ENCODE measurements at regions of chr13 and their contacts with region 1.

Region 1: GRCh38 chr13:31742097-31742734 is 2.9 kb downstream of the RXFP2 start:
- DNase-seq: peak; percentile 40
- ATAC-seq: peak; percentile 90
- H3K4me3 ChIP-seq: no peak overlapping the region
- H3K27ac ChIP-seq: no peak overlapping the region
- H3K4me1 ChIP-seq: no peaks in the 10 kb centered on the region
- H3K27me3 ChIP-seq: peaks cover 65% of the 10 kb centered on the region
- CTCF ChIP-seq: peak; percentile 58 to 98 (median 96); a peak in 5 of 6 replicates
- POLR2A ChIP-seq: no peak
- RAD21 ChIP-seq: peak; percentile 74

Region 2: GRCh38 chr13:31056644-31057271 is 685.5 kb before region 1 on chr13:
- CTCF ChIA-PET with region 1: no interaction called
- POLR2A ChIA-PET with region 1: no interaction called
- RAD21 ChIA-PET with region 1: no interaction called
- intact Hi-C with region 1: no loop called
- DNase-seq: no peak
- ATAC-seq: no peak
- H3K4me3 ChIP-seq: no peak overlapping the region
- H3K27ac ChIP-seq: no peak overlapping the region
- H3K4me1 ChIP-seq: peaks cover 3 to 7% of the 10 kb centered on the region in 2 experiments; a peak in 2 of 4 replicates
- H3K27me3 ChIP-seq: no peaks in the 10 kb centered on the region
- CTCF ChIP-seq: no peak
- POLR2A ChIP-seq: no peak
- RAD21 ChIP-seq: no peak

Region 3: GRCh38 chr13:31236211-31236786 is 505.9 kb before region 1 on chr13:
- CTCF ChIA-PET with region 1: interaction called, 9 read pairs
- POLR2A ChIA-PET with region 1: no interaction called
- RAD21 ChIA-PET with region 1: no interaction called
- intact Hi-C with region 1: loop called (anchors 5 kb)
- DNase-seq: peak; percentile 15
- ATAC-seq: peak; percentile 73
- H3K4me3 ChIP-seq: no peak overlapping the region
- H3K27ac ChIP-seq: no peak overlapping the region
- H3K4me1 ChIP-seq: no peaks in the 10 kb centered on the region
- H3K27me3 ChIP-seq: no peaks in the 10 kb centered on the region
- CTCF ChIP-seq: peak; percentile 59 to 88 (median 73); a peak in 5 of 6 replicates
- POLR2A ChIP-seq: no peak
- RAD21 ChIP-seq: peak; percentile 62

Region 4: DNA sequence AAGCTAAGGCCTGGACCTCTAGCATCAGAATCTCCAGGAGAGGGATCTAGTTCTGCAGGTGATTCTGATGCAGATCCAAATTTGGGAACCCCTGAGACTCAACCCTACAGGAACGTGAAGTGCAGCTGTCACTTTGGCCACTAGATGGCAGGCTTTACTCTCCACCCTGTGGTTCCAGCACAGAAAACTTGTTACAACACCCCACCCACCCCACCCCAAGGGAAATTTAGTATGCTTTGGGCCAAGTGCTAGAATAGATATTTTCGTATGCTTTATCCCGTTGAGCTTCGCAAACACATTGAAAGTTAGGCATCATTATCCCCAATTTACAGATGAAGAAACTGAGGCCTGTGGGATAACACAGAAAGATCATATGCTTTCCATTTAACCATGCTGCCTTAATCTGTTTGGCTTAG is 310.5 kb before region 1 on chr13:
- CTCF ChIA-PET with region 1: interaction called, 5 read pairs
- POLR2A ChIA-PET with region 1: no interaction called
- RAD21 ChIA-PET with region 1: no interaction called
- intact Hi-C with region 1: loop called (anchors 1 kb)
- DNase-seq: peak; percentile 22
- ATAC-seq: peak; percentile 84
- H3K4me3 ChIP-seq: no peak overlapping the region
- H3K27ac ChIP-seq: no peak overlapping the region
- H3K4me1 ChIP-seq: no peaks in the 10 kb centered on the region
- H3K27me3 ChIP-seq: peaks cover 48% of the 10 kb centered on the region
- CTCF ChIP-seq: peak; percentile 6 to 80 (median 71); a peak in 4 of 6 replicates
- POLR2A ChIP-seq: no peak
- RAD21 ChIP-seq: peak; percentile 43; the same call in 1 of the 2 replicates

Region 5: GRCh38 chr13:31538067-31539042 is 203.9 kb before region 1 on chr13:
- CTCF ChIA-PET with region 1: interaction called, 30 read pairs
- POLR2A ChIA-PET with region 1: no interaction called
- RAD21 ChIA-PET with region 1: no interaction called
- intact Hi-C with region 1: loop called (anchors 1 kb)
- DNase-seq: peak; percentile 8
- ATAC-seq: peak; percentile 78
- H3K4me3 ChIP-seq: no peak overlapping the region
- H3K27ac ChIP-seq: no peak overlapping the region
- H3K4me1 ChIP-seq: no peaks in the 10 kb centered on the region
- H3K27me3 ChIP-seq: peaks cover 36% of the 10 kb centered on the region
- CTCF ChIP-seq: peak; percentile 13 to 65 (median 63); a peak in 4 of 6 replicates
- POLR2A ChIP-seq: no peak
- RAD21 ChIP-seq: peak; percentile 22; the same call in 1 of the 2 replicates

Region 6: DNA sequence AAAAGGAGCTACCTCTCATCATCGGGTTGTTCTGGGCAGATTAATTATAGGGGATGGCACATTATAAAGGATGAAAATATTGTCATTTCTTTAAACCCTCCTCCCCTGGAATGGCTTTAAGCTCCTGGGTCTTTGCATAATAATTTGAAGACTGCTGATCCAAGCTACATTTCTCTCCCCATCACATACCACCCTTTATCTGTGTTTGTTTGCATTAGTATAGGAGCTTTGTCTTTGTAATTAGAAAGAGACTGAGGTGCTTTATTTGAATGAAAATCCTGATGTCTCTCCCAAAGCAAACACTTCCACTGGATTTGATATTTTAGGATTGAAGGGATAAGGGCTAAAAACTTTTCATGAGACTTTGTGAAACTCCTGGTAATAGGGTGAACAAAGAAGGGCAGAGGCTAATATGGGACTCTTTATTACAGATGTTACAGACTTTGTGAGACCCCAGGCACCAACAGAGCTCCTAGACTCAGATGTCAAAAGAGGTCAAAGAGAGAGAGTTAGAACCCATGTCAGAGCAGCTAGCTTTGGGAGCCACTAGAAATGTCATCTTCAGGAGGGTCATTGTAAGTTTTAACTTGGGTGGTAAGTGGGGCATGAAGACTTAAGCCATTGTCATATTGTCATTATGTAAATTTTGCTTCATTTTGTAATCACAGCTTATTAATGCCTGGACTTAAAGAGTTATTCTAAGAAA is 78.2 kb before region 1 on chr13:
- CTCF ChIA-PET with region 1: no interaction called
- POLR2A ChIA-PET with region 1: no interaction called
- RAD21 ChIA-PET with region 1: no interaction called
- intact Hi-C with region 1: loop called (anchors 5 kb)
- DNase-seq: no peak
- ATAC-seq: no peak
- H3K4me3 ChIP-seq: no peak overlapping the region
- H3K27ac ChIP-seq: no peak overlapping the region
- H3K4me1 ChIP-seq: no peaks in the 10 kb centered on the region
- H3K27me3 ChIP-seq: peaks cover 20% of the 10 kb centered on the region
- CTCF ChIP-seq: no peak
- POLR2A ChIP-seq: no peak
- RAD21 ChIP-seq: no peak

Measured in HCT116 (cell line).